K562 (cell line): ENCODE measurements at regions of chr12 and their contacts with region 1.

Region 1: DNA sequence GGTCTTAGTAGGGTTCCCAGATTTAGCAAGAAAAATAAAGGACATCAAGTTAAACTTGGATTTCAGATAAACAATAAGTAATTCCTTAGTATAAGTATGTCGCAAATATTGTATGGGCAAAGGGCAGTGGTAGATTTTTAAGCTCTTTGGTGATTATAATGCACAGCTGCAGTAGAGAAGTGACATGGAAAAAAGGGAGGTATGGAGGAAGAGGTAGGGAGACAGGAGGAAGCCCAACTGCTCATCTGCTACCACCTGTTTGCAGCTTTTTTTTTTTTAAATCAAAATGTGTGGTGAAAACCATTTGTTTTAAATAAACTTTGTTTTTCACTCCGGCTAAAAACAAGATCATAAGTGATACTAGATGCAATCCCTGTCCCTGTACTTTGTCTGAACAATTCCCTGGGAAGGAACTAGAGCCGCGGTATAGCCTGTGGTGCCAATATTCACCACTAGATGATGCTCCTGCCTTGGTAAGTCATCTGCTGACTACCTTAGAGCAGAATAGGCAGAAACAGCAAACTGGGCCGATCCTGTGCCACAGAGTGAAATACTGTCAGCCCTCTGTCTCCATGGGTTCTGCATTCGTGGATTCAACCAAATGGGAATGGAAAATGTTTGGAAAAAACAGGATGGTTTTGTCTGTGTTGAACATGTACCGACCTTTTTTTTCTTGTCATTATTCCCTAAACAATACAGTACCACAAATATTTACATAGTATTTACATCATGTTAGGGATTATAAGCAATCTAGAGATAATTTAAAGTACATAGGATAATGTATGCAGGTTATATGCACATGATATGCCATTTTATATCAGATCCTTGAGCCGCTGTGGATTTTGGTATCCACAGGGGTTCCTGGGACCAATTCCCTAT is 62.4 kb upstream of the PLBD1 start:
- DNase-seq: peak; percentile 40 to 62 (median 46)
- ATAC-seq: peak; percentile 98
- H3K4me3 ChIP-seq: no peak overlapping the region
- H3K27ac ChIP-seq: no peak overlapping the region
- H3K4me1 ChIP-seq: no peaks in the 10 kb centered on the region
- H3K27me3 ChIP-seq: no peaks in the 10 kb centered on the region
- CTCF ChIP-seq: peak; percentile 78 to 86 (median 80)
- EP300 ChIP-seq: no peak
- POLR2A ChIP-seq: no peak
- RAD21 ChIP-seq: peak; percentile 83 to 91

Region 2: GRCh38 chr12:14239350-14239934 is 390.6 kb before region 1 on chr12:
- CTCF ChIA-PET with region 1: interaction called, 4 read pairs
- POLR2A ChIA-PET with region 1: no interaction called
- in situ Hi-C with region 1: no loop called
- intact Hi-C with region 1: loop called (anchors 10 kb)
- DNase-seq: no peak
- ATAC-seq: peak; percentile 42
- H3K4me3 ChIP-seq: no peak overlapping the region
- H3K27ac ChIP-seq: no peak overlapping the region
- H3K4me1 ChIP-seq: no peaks in the 10 kb centered on the region; a peak in 2 of 5 replicates
- H3K27me3 ChIP-seq: no peaks in the 10 kb centered on the region
- CTCF ChIP-seq: no peak
- EP300 ChIP-seq: no peak
- POLR2A ChIP-seq: no peak
- RAD21 ChIP-seq: no peak

Region 3: GRCh38 chr12:14664510-14664909 is 34.4 kb after region 1 on chr12:
- CTCF ChIA-PET with region 1: interaction called, 6 read pairs
- POLR2A ChIA-PET with region 1: no interaction called
- in situ Hi-C with region 1: no loop called
- intact Hi-C with region 1: loop called (anchors 1 kb)
- DNase-seq: peak in 3 of 4 experiments; percentile 6 to 16 (median 7)
- ATAC-seq: no peak
- H3K4me3 ChIP-seq: no peak overlapping the region
- H3K27ac ChIP-seq: no peak overlapping the region
- H3K4me1 ChIP-seq: no peaks in the 10 kb centered on the region
- H3K27me3 ChIP-seq: no peaks in the 10 kb centered on the region
- CTCF ChIP-seq: peak in 2 of 3 experiments; percentile 32 to 57; a peak in 3 of 6 replicates
- EP300 ChIP-seq: no peak
- POLR2A ChIP-seq: no peak
- RAD21 ChIP-seq: peak; percentile 72

Region 4: DNA sequence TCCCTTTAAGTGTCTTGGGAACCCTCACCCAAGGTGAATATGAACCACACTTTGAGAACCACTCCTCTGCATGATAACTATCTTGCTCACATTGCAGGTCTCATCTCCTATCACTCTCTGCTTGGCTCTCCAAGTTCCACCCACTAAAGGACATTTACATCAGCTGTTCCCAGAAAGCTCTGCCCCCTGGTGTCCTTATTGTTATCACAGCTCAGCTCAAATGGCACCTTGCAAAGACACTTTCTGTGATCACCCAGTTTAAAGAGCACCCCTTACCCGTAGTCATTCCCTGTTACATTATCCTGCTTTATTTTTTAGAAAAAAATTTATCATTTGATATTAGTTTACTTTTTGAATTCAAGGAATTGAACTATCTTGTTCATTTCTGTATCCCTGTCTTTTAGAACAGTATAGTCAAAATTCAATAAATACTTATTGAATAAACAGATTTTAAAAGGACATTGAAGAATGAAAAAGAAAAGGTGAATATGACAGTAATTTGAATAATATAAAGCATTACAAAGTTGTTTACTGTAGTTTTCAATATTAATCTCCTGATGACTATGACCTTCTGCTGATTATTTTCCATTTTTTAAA is 86.9 kb after region 1 on chr12:
- CTCF ChIA-PET with region 1: interaction called, 6 read pairs
- POLR2A ChIA-PET with region 1: no interaction called
- in situ Hi-C with region 1: no loop called
- intact Hi-C with region 1: loop called (anchors 2 kb)
- DNase-seq: peak; percentile 18 to 44 (median 30)
- ATAC-seq: peak; percentile 81
- H3K4me3 ChIP-seq: no peak overlapping the region
- H3K27ac ChIP-seq: no peak overlapping the region
- H3K4me1 ChIP-seq: no peaks in the 10 kb centered on the region
- H3K27me3 ChIP-seq: no peaks in the 10 kb centered on the region
- CTCF ChIP-seq: peak; percentile 34 to 51 (median 45); a peak in 5 of 6 replicates
- EP300 ChIP-seq: no peak
- POLR2A ChIP-seq: no peak
- RAD21 ChIP-seq: peak in 1 of 2 experiments; percentile 59; a peak in 3 of 4 replicates

Region 5: DNA sequence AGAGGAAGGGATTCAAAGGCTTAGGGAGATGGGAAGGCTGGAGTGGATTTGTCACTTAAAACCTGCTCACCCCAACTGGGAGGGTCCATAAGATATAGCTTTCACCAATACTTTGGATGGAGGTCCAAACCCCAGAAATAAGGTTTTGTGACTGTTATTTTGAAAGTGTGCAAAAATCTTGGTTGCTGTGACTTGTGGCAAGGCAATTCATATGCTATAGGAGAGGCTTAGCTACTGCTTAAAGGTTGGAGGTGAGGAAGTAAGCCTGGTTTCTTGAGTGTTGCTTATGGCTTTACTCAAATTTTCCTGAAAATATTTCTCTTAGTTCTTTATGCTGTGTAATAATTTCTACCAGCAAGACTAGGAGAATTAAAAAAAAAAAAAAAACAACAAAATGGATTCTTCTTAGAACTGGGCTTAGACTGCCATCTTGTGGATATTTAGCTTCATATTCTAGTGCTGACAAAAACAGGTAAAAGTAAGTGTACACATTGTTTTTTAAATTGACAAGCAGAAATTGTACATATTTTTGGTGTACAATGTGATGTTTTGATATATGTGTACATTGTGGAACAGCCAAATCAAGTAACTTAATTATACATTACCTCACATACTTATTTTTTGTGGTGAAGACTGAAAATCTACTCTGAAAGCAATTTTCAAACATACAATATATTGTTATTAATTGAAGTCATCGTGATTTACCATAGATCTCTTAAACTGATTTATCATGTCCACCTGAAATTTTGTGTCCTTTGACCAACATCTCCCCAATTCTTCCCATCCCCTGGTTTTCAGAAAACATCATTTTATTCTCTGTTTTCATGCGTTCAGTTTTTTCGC is 365.7 kb after region 1 on chr12:
- CTCF ChIA-PET with region 1: interaction called, 3 read pairs
- POLR2A ChIA-PET with region 1: no interaction called
- in situ Hi-C with region 1: no loop called
- intact Hi-C with region 1: loop called (anchors 1 kb)
- DNase-seq: peak; percentile 6 to 49 (median 12)
- ATAC-seq: no peak
- H3K4me3 ChIP-seq: no peak overlapping the region
- H3K27ac ChIP-seq: no peak overlapping the region
- H3K4me1 ChIP-seq: no peaks in the 10 kb centered on the region
- H3K27me3 ChIP-seq: no peaks in the 10 kb centered on the region
- CTCF ChIP-seq: peak in 2 of 3 experiments; percentile 37 to 69; a peak in 3 of 6 replicates
- EP300 ChIP-seq: no peak
- POLR2A ChIP-seq: no peak
- RAD21 ChIP-seq: peak; percentile 63 to 75

Region 6: GRCh38 chr12:15268927-15269552 is 639.0 kb after region 1 on chr12:
- CTCF ChIA-PET with region 1: no interaction called
- POLR2A ChIA-PET with region 1: no interaction called
- in situ Hi-C with region 1: no loop called
- intact Hi-C with region 1: loop called (anchors 10 kb)
- DNase-seq: peak; percentile 34 to 51 (median 36)
- ATAC-seq: peak; percentile 61; the same call in 2 of the 3 replicates
- H3K4me3 ChIP-seq: no peak overlapping the region
- H3K27ac ChIP-seq: no peak overlapping the region
- H3K4me1 ChIP-seq: no peaks in the 10 kb centered on the region
- H3K27me3 ChIP-seq: no peaks in the 10 kb centered on the region
- CTCF ChIP-seq: peak; percentile 62 to 74 (median 69)
- EP300 ChIP-seq: no peak
- POLR2A ChIP-seq: no peak
- RAD21 ChIP-seq: peak; percentile 63 to 70

Region 7: DNA sequence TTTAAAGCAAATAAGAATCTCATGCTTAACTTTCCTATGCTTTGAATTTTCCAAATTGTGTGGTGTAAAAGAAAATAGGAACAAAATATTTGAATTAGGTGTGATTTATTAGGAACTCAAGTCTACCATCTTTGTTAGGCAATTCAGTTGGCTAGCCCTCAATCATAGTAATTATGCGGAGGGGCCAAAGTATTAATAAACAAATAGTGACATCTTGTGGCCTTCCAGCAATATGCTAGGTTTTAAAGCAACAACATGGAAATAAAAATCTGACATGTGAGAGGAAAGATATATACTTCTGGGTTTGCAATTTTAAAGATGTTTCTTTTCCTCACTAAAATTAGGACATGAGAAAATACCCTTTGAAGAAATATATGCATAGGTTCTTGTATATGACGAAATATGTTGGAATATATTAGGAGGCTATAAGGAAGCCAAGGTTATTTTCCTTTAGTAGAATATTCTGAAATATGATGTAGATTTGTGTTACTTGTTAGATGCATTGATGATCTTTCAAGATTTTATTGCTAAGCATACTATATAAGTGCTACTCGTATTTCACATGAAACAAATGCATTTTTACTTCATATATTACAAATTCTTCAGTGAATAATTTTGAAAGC is 892.6 kb after region 1 on chr12:
- CTCF ChIA-PET with region 1: no interaction called
- POLR2A ChIA-PET with region 1: no interaction called
- in situ Hi-C with region 1: no loop called
- intact Hi-C with region 1: loop called (anchors 10 kb)
- DNase-seq: peak in 1 of 4 experiments; percentile 9
- ATAC-seq: no peak
- H3K4me3 ChIP-seq: no peak overlapping the region
- H3K27ac ChIP-seq: no peak overlapping the region
- H3K4me1 ChIP-seq: no peaks in the 10 kb centered on the region
- H3K27me3 ChIP-seq: no peaks in the 10 kb centered on the region
- CTCF ChIP-seq: peak in 2 of 3 experiments; percentile 22 to 51; a peak in 2 of 6 replicates
- EP300 ChIP-seq: no peak
- POLR2A ChIP-seq: no peak
- RAD21 ChIP-seq: peak; percentile 49 to 73; a peak in 3 of 4 replicates